Activated T-helper 2 cell treated with anti-CD3 and anti-CD28 coated beads, Interferon-gamma antibody, Interleukin-2, Interleukin-4, amounts not matched to agents 10 μg/mL and 5 μg/mL and 100 μg/mL, durations not matched to agents 14 hours and 24 hours and 36 hours (primary cell): ENCODE measurements at regions of chr10 and their contacts with region 1.

Region 1: GRCh38 chr10:63083904-63084689 is 49.0 kb upstream of the NRBF2 start:
- DNase-seq: peak; percentile 16
- H3K4me3 Mint-ChIP-seq: no peak overlapping the region
- H3K27ac Mint-ChIP-seq: no peak overlapping the region
- H3K4me1 Mint-ChIP-seq: peaks cover 12% of the 10 kb centered on the region
- H3K27me3 Mint-ChIP-seq: peaks cover 23% of the 10 kb centered on the region

Region 2: DNA sequence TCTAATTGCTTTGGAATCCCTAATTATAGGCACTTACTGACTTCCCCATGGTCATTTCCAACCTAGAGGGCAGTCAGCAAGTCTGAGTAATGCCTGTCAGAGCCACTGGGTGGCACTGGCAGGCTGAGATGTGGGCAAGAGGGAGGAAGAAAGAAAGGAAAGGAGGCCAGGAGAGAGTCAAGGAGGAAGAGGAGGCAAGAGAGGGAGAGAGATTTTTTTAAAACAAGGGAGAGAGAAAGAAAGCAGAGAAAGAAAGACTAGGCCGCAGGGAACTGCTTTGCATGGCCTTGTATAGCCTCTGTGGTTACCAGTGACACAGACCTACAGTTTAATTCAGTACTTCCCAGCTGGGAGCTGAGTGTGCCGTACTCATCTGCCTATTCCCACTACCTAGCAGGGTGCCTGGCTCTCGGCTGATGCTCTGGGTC is 490.0 kb before region 1 on chr10:
- intact Hi-C with region 1: loop called (anchors 1 kb)
- DNase-seq: peak; percentile 24
- H3K4me3 Mint-ChIP-seq: no peak overlapping the region
- H3K27ac Mint-ChIP-seq: no peak overlapping the region
- H3K4me1 Mint-ChIP-seq: peaks cover 13% of the 10 kb centered on the region
- H3K27me3 Mint-ChIP-seq: peaks cover 17% of the 10 kb centered on the region

Region 3: GRCh38 chr10:63064706-63065105 is 19.4 kb before region 1 on chr10:
- intact Hi-C with region 1: no loop called
- DNase-seq: no peak
- H3K4me3 Mint-ChIP-seq: peak overlapping the region; percentile 31
- H3K27ac Mint-ChIP-seq: peak overlapping the region; percentile 81
- H3K4me1 Mint-ChIP-seq: peaks cover 43% of the 10 kb centered on the region
- H3K27me3 Mint-ChIP-seq: peaks cover 2% of the 10 kb centered on the region